ENCODE measurements at regions of chrX and their contacts with region 1.

Region 1: DNA sequence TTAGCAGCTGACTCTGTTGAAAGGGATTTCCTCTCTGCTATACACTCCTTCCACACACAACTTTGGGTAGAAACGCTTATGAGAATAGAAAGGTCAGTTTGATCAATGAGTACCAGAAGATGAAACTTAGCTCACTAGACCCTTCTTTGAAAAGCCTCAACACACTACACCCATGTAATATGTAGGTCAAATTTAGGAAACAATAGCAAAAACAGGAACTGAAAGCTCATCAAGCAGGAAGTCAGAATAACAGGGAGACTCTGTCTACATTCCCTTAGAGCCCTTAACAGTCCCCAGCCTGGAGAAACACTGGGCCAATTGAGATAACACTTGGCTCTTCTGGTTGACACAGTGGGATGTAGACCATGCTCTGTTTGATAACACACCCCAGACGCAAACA is 30.7 kb downstream of the SRPX2 start:
- H3K4me3 ChIP-seq: no peak overlapping the region
- H3K27ac ChIP-seq: no peak overlapping the region
- H3K4me1 ChIP-seq: no peaks in the 10 kb centered on the region
- CTCF ChIP-seq: no peak

Region 2: GRCh38 chrX:99613041-99613440 is 1061.7 kb before region 1 on chrX:
- CTCF ChIA-PET with region 1: no interaction called
- POLR2A ChIA-PET with region 1: no interaction called
- H3K4me3 ChIP-seq: no peak overlapping the region
- H3K27ac ChIP-seq: no peak overlapping the region
- H3K4me1 ChIP-seq: no peaks in the 10 kb centered on the region
- CTCF ChIP-seq: no peak

Region 3: DNA sequence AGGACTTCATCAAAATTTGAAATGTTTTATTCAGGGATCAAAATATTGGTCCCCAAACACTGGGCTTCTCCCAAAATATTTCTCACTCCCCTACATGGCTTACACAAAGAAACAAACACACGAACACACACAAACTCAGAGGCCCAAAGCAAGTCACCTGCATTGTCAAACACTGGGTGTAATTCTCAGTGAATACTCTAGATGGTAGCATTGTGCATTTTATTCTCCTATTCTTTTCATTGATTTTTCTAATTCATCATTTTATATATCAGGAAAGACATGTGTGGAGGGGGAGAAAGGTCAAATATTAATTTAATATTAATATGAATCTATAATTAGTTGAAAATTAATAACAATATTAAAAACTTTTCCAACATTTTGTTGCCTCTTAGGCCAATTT is 162.2 kb before region 1 on chrX:
- CTCF ChIA-PET with region 1: interaction called, 11 read pairs
- POLR2A ChIA-PET with region 1: no interaction called
- H3K4me3 ChIP-seq: no peak overlapping the region
- H3K27ac ChIP-seq: no peak overlapping the region
- H3K4me1 ChIP-seq: no peaks in the 10 kb centered on the region
- CTCF ChIP-seq: no peak

Region 4: DNA sequence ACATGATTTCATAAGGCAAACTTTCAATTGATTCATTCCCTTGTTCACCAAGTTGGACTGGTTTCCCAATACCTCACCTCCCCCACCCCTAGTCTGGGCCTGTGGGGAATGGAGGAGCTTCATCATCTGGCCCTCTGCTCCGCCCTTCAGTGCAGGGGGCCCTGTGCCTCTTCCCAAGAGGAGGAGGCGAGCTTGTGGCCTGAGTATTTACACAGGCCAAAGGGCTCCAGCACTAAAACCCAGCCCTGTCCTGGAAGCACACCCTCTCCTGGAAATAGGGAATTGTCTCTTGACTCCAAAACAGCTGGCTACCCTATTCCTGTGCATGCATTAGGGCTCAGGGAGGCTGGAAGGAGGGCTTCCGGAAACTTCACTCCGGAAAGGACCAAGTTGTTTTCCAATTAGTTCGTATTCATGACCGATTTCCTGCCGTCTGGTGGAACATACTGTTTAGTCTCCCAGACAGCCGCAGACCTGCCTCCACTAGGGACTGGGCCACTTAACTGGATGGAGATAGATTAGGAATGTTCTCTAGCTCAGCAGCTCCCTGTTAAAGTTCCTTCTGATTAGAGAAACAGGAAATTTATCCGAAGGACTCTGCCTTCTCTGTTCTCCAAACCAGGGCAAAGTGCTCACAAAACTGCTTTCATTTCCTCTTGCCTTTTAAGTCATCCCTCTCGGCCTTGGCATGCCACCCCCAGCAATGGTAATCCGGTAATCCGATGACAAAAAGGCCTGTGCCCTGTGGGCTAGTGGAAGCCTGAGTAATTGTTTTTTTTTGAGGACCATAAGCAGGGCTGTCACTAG is 25.0 kb before region 1 on chrX:
- CTCF ChIA-PET with region 1: interaction called, 25 read pairs
- POLR2A ChIA-PET with region 1: no interaction called
- H3K4me3 ChIP-seq: no peak overlapping the region
- H3K27ac ChIP-seq: no peak overlapping the region
- H3K4me1 ChIP-seq: no peaks in the 10 kb centered on the region
- CTCF ChIP-seq: no peak

Region 5: GRCh38 chrX:100659431-100660137 is 15.1 kb before region 1 on chrX:
- CTCF ChIA-PET with region 1: interaction called, 25 read pairs
- POLR2A ChIA-PET with region 1: no interaction called
- H3K4me3 ChIP-seq: no peak overlapping the region
- H3K27ac ChIP-seq: no peak overlapping the region
- H3K4me1 ChIP-seq: no peaks in the 10 kb centered on the region
- CTCF ChIP-seq: no peak

Region 6: DNA sequence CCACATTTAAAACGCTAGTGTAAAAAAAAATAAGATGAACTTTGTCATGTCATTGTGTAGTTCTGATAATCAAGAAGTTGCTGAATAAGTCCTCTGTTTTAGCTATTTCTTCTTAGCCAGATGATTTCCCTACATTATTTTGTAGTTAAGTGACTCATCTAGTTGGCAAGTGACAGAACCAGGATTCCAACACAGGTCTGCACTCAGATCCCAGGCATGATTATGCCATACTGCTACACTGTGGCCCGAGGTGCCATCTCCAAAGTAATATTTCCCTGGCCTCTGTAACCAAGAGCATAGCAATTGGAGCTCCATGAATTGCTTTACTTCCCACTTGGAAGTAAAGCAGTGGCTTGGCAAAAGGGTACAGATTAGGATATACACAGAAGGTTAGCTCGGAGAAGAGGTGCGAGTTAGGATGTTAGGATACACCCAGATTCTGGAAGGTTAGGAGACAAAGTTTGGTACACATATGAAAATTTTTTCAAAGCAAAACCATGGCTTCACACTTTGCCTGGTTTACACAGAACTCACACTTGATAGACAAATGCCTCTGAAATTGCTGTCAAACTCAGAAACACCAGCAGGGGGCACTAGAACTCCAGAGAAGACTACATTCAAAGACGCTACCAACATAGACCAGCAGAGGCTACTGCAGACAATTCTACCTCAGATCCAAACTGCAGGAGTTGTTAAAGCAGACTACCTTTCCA is 10.7 kb after region 1 on chrX:
- CTCF ChIA-PET with region 1: interaction called, 123 read pairs
- POLR2A ChIA-PET with region 1: interaction called, 3 read pairs
- H3K4me3 ChIP-seq: no peak overlapping the region
- H3K27ac ChIP-seq: no peak overlapping the region
- H3K4me1 ChIP-seq: no peaks in the 10 kb centered on the region
- CTCF ChIP-seq: peak; percentile 91

Measured in HEK293 (cell line).